CD4-positive, alpha-beta T cell (primary cell): ENCODE measurements at regions of chr6 and their contacts with region 1.

Region 1: GRCh38 chr6:15327271-15327670 is 81.4 kb downstream of the JARID2 start:
- DNase-seq: peak; percentile 7 to 66 (median 36)
- ATAC-seq: peak; percentile 80
- H3K4me3 ChIP-seq: no peak overlapping the region
- H3K4me3 Mint-ChIP-seq: peak overlapping the region; percentile 70
- H3K27ac ChIP-seq: no peak overlapping the region
- H3K27ac Mint-ChIP-seq: peak overlapping the region; percentile 25
- H3K4me1 ChIP-seq: peaks cover 40% of the 10 kb centered on the region
- H3K4me1 Mint-ChIP-seq: peaks cover 88% of the 10 kb centered on the region
- H3K27me3 ChIP-seq: no peaks in the 10 kb centered on the region
- H3K27me3 Mint-ChIP-seq: no peaks in the 10 kb centered on the region
- CTCF ChIP-seq: peak; percentile 15

Region 2: GRCh38 chr6:15254070-15254841 is 73.0 kb before region 1 on chr6:
- CTCF ChIA-PET with region 1: interaction called, 5 read pairs
- POLR2A ChIA-PET with region 1: interaction called, 3 read pairs
- intact Hi-C with region 1: loop called (anchors 5 kb)
- DNase-seq: peak in 2 of 14 experiments; percentile 35 to 46
- ATAC-seq: no peak
- H3K4me3 ChIP-seq: no peak overlapping the region
- H3K4me3 Mint-ChIP-seq: peak overlapping the region; percentile 80
- H3K27ac ChIP-seq: peak overlapping the region in 1 of 2 donors; percentile 46
- H3K27ac Mint-ChIP-seq: peak overlapping the region; percentile 96
- H3K4me1 ChIP-seq: peaks cover 74% of the 10 kb centered on the region
- H3K4me1 Mint-ChIP-seq: peaks cover 99% of the 10 kb centered on the region
- H3K27me3 ChIP-seq: no peaks in the 10 kb centered on the region
- H3K27me3 Mint-ChIP-seq: no peaks in the 10 kb centered on the region
- CTCF ChIP-seq: no peak

Region 3: DNA sequence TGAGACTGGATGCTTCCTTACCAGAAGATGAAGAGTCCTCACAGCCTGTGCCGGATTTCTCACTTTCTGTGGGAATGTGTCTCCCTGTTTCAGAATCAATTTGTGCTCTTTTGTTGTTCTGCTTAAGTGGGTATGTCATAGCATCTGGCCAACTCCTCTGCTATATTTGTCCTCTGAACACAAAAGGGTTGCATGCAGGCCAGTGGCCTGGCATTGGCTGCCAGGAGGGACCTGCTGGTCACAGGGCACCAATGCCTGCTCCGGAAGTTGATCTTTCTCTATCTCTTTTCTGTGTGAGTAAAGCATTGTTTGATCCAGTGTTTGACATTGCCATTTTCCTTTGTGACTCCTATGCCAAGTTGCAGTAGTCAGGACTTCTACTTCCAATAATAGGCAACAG is 33.6 kb before region 1 on chr6:
- CTCF ChIA-PET with region 1: no interaction called
- POLR2A ChIA-PET with region 1: no interaction called
- intact Hi-C with region 1: loop called in 1 of 2 experiments (anchors 5 kb)
- DNase-seq: no peak
- ATAC-seq: no peak
- H3K4me3 ChIP-seq: no peak overlapping the region
- H3K4me3 Mint-ChIP-seq: no peak overlapping the region
- H3K27ac ChIP-seq: no peak overlapping the region
- H3K27ac Mint-ChIP-seq: no peak overlapping the region
- H3K4me1 ChIP-seq: peaks cover 40% of the 10 kb centered on the region
- H3K4me1 Mint-ChIP-seq: peaks cover 83% of the 10 kb centered on the region
- H3K27me3 ChIP-seq: no peaks in the 10 kb centered on the region
- H3K27me3 Mint-ChIP-seq: no peaks in the 10 kb centered on the region
- CTCF ChIP-seq: no peak

Region 4: DNA sequence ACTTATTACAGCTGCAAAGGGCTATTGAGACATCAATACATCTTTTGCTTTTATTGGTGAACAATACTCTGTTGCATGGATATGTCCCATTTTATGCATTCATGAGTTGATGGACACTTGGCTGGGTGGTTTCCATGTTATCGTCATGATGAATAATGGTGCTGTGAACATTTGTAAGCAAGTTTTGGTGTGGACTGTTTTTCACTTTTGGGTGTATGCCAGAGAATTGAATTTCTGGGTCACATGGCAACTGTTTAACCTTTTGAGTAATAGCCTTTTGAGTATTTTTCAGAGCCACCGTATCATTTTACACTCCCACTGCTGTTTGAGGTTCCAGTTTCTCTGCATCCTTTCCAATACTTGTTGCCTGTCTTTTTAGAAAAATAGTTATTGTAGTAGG is 25.6 kb after region 1 on chr6:
- CTCF ChIA-PET with region 1: no interaction called
- POLR2A ChIA-PET with region 1: no interaction called
- intact Hi-C with region 1: no loop called
- DNase-seq: peak in 1 of 14 experiments; percentile 40
- ATAC-seq: no peak
- H3K4me3 ChIP-seq: no peak overlapping the region
- H3K4me3 Mint-ChIP-seq: no peak overlapping the region
- H3K27ac ChIP-seq: no peak overlapping the region
- H3K27ac Mint-ChIP-seq: no peak overlapping the region
- H3K4me1 ChIP-seq: peaks cover 7% of the 10 kb centered on the region
- H3K4me1 Mint-ChIP-seq: peaks cover 88% of the 10 kb centered on the region
- H3K27me3 ChIP-seq: no peaks in the 10 kb centered on the region
- H3K27me3 Mint-ChIP-seq: no peaks in the 10 kb centered on the region
- CTCF ChIP-seq: no peak

Region 5: GRCh38 chr6:15365273-15365687 is 38.0 kb after region 1 on chr6:
- CTCF ChIA-PET with region 1: no interaction called
- POLR2A ChIA-PET with region 1: no interaction called
- intact Hi-C with region 1: loop called in 1 of 2 experiments (anchors 5 kb)
- DNase-seq: peak; percentile 27 to 82 (median 50)
- ATAC-seq: peak; percentile 95
- H3K4me3 ChIP-seq: no peak overlapping the region
- H3K4me3 Mint-ChIP-seq: peak overlapping the region; percentile 43
- H3K27ac ChIP-seq: no peak overlapping the region
- H3K27ac Mint-ChIP-seq: no peak overlapping the region
- H3K4me1 ChIP-seq: peaks cover 23% of the 10 kb centered on the region
- H3K4me1 Mint-ChIP-seq: no peaks in the 10 kb centered on the region
- H3K27me3 ChIP-seq: no peaks in the 10 kb centered on the region
- H3K27me3 Mint-ChIP-seq: no peaks in the 10 kb centered on the region
- CTCF ChIP-seq: no peak

Region 6: DNA sequence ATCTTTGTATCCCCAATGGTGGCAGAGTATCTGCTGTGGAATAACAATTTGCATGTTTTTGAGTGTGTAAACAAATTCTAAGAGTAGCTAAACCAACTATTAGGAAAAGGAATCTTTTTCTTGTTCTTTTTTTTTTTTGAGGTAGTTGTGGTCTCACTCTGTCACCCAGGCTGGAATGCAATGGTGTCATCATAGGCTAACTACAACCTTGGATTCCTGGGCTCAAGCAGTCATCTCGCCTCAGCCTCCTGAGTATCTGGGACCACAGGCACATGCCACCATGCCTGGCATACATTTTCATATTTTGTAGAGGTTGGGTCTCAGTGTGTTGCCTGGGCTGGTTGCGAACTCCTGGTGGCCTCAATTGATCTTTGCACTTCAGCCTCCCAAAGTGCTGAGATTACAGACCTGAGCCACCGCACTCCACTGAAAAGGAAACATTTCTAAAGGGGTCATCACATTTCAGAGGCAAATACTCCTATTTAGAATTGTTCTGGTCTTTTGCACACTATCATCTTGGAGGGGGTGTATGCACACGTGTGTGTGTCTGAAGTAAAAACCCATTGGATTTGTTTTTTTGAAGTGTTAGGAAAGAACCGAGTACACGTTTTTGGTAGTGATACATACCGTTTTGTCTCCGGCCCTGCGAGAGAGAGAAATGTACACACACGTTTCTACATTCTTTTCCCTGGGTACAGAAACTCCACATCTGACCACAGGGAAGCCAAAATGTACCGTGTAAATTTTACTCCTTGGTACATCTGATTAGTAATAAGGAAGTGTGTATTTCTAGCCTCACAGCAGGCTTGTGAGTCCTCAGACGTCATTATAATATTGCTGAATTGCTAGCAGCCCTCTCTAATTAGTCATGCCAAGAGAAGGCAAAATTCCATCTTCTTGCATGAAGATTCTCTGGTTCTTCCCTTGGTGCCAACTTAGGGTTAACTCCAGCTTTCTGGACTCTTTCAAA is 102.2 kb after region 1 on chr6:
- CTCF ChIA-PET with region 1: no interaction called
- POLR2A ChIA-PET with region 1: no interaction called
- intact Hi-C with region 1: no loop called
- DNase-seq: peak in 2 of 14 experiments; percentile 39 to 50
- ATAC-seq: no peak
- H3K4me3 ChIP-seq: no peak overlapping the region
- H3K4me3 Mint-ChIP-seq: no peak overlapping the region
- H3K27ac ChIP-seq: no peak overlapping the region
- H3K27ac Mint-ChIP-seq: no peak overlapping the region
- H3K4me1 ChIP-seq: peaks cover 45% of the 10 kb centered on the region
- H3K4me1 Mint-ChIP-seq: peaks cover 95% of the 10 kb centered on the region
- H3K27me3 ChIP-seq: no peaks in the 10 kb centered on the region
- H3K27me3 Mint-ChIP-seq: no peaks in the 10 kb centered on the region
- CTCF ChIP-seq: no peak

Region 7: DNA sequence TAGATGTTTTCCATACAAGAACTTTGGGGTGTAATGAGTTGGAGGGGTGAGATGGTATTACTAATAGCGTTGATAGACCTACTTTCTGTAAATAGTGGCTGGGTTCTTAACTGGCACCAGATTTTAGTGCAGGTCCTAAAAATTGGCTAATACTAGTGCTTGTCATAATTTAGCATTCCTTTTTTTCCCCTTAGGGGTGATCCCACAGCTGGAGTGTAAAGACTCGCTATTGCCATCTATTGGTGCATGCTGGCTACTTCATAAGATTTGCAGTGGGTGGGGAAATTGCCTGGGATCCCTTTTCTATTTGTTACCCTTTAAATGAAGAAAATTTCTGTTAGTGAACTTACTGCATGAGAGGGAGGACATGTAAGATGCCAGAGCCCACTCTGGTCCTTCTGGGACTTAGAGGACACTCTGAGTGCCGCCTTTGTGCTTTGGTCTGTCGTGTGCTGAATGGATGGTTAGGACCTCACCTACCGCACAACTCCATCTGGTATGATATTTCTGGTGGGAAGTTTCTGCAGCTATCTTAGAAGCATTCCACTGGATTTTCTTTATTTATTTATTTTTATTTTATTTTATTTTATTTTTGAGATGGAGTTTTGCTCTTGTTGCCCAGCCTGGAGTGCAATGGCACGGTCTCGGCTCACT is 114.1 kb after region 1 on chr6:
- CTCF ChIA-PET with region 1: no interaction called
- POLR2A ChIA-PET with region 1: no interaction called
- intact Hi-C with region 1: loop called (anchors 2 to 5 kb)
- DNase-seq: peak in 11 of 14 experiments; percentile 7 to 73 (median 16)
- ATAC-seq: peak; percentile 69
- H3K4me3 ChIP-seq: no peak overlapping the region
- H3K4me3 Mint-ChIP-seq: no peak overlapping the region
- H3K27ac ChIP-seq: no peak overlapping the region
- H3K27ac Mint-ChIP-seq: no peak overlapping the region
- H3K4me1 ChIP-seq: peaks cover 21% of the 10 kb centered on the region
- H3K4me1 Mint-ChIP-seq: peaks cover 89% of the 10 kb centered on the region
- H3K27me3 ChIP-seq: no peaks in the 10 kb centered on the region
- H3K27me3 Mint-ChIP-seq: no peaks in the 10 kb centered on the region
- CTCF ChIP-seq: peak; percentile 86

Region 8: GRCh38 chr6:15491255-15491985 is 164.1 kb after region 1 on chr6:
- CTCF ChIA-PET with region 1: no interaction called
- POLR2A ChIA-PET with region 1: no interaction called
- intact Hi-C with region 1: loop called in 1 of 2 experiments (anchors 1 kb)
- DNase-seq: peak; percentile 52 to 80 (median 62)
- ATAC-seq: peak; percentile 84
- H3K4me3 ChIP-seq: no peak overlapping the region
- H3K4me3 Mint-ChIP-seq: no peak overlapping the region
- H3K27ac ChIP-seq: no peak overlapping the region
- H3K27ac Mint-ChIP-seq: peak overlapping the region; percentile 28
- H3K4me1 ChIP-seq: peaks cover 7% of the 10 kb centered on the region
- H3K4me1 Mint-ChIP-seq: peaks cover 47% of the 10 kb centered on the region
- H3K27me3 ChIP-seq: no peaks in the 10 kb centered on the region
- H3K27me3 Mint-ChIP-seq: no peaks in the 10 kb centered on the region
- CTCF ChIP-seq: peak; percentile 85